Lower leg skin (tissue), 4 donors: ENCODE measurements at regions of chr10 and their contacts with region 1.

Region 1: GRCh38 chr10:93379731-93380575 is 102.2 kb downstream of the MYOF start:
- DNase-seq: no peak
- H3K4me3 ChIP-seq: no peak overlapping the region
- CTCF ChIP-seq: no peak
- POLR2A ChIP-seq: no peak

Region 2: GRCh38 chr10:93106631-93107072 is 273.3 kb before region 1 on chr10:
- intact Hi-C with region 1: no loop called
- DNase-seq: no peak
- H3K4me3 ChIP-seq: no peak overlapping the region
- CTCF ChIP-seq: peak in 1 of 3 donors; percentile 58
- POLR2A ChIP-seq: no peak

Region 3: GRCh38 chr10:93482145-93482834 is 102.3 kb after region 1 on chr10 and contains the start of gene MYOF:
- intact Hi-C with region 1: loop called (anchors 2 kb)
- DNase-seq: peak; percentile 79 to 93
- H3K4me3 ChIP-seq: peak within 1 kb of the TSS; percentile 41
- CTCF ChIP-seq: peak in 1 of 3 donors; percentile 14
- POLR2A ChIP-seq: no peak
- total RNA-seq, gene MYOF: 65.5 to 129 (median 90.3) TPM

Region 4: DNA sequence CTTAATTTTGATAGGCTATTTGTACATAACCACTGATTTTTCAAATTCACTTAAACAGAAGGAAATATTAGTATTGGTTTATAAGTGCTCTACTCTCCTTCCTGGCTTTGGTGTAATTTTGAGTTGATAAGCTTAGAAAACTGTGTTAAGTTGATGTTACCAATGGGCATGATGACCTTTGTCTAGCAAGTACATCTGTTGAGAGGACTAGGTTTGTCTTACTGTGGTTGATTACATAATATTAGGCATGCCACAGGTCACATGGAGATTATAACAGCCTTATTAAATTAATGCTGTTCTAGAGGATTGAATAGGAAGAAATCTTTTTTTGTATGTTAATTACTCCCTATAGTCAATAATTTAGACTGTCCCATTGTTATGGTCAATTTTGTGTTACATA is 1330.6 kb after region 1 on chr10:
- intact Hi-C with region 1: no loop called
- DNase-seq: no peak
- H3K4me3 ChIP-seq: no peak overlapping the region
- CTCF ChIP-seq: no peak
- POLR2A ChIP-seq: no peak